Naive thymus-derived CD4-positive, alpha-beta T cell (primary cell): ENCODE measurements at regions of chr11 and their contacts with region 1.

Region 1: GRCh38 chr11:122505304-122506006 is 150.1 kb upstream of the UBASH3B start:
- DNase-seq: peak in 8 of 9 donors; percentile 0 to 51 (median 18)
- ATAC-seq: peak; percentile 78
- H3K4me3 ChIP-seq: no peak overlapping the region
- H3K4me3 Mint-ChIP-seq: no peak overlapping the region
- H3K27ac ChIP-seq: no peak overlapping the region
- H3K27ac Mint-ChIP-seq: no peak overlapping the region
- H3K4me1 ChIP-seq: no peaks in the 10 kb centered on the region
- H3K4me1 Mint-ChIP-seq: peaks cover 0 to 4% (median 0%) of the 10 kb centered on the region in 7 donors
- H3K27me3 ChIP-seq: no peaks in the 10 kb centered on the region
- H3K27me3 Mint-ChIP-seq: peaks cover 10 to 58% (median 44%) of the 10 kb centered on the region in 5 donors

Region 2: GRCh38 chr11:122215244-122215992 is 290.0 kb before region 1 on chr11:
- CTCF ChIA-PET with region 1: no interaction called
- POLR2A ChIA-PET with region 1: no interaction called
- intact Hi-C with region 1: loop called in 1 of 2 experiments (anchors 1 kb)
- DNase-seq: peak in 1 of 9 donors; percentile 32
- ATAC-seq: peak; percentile 57
- H3K4me3 ChIP-seq: no peak overlapping the region
- H3K4me3 Mint-ChIP-seq: no peak overlapping the region
- H3K27ac ChIP-seq: no peak overlapping the region
- H3K27ac Mint-ChIP-seq: no peak overlapping the region
- H3K4me1 ChIP-seq: no peaks in the 10 kb centered on the region
- H3K4me1 Mint-ChIP-seq: no peaks in the 10 kb centered on the region
- H3K27me3 ChIP-seq: no peaks in the 10 kb centered on the region
- H3K27me3 Mint-ChIP-seq: peaks cover 0 to 15% (median 4%) of the 10 kb centered on the region in 5 donors